Right ventricle myocardium superior (tissue), 1 donor: ENCODE measurements at regions of chr10 and their contacts with region 1.

Region 1: DNA sequence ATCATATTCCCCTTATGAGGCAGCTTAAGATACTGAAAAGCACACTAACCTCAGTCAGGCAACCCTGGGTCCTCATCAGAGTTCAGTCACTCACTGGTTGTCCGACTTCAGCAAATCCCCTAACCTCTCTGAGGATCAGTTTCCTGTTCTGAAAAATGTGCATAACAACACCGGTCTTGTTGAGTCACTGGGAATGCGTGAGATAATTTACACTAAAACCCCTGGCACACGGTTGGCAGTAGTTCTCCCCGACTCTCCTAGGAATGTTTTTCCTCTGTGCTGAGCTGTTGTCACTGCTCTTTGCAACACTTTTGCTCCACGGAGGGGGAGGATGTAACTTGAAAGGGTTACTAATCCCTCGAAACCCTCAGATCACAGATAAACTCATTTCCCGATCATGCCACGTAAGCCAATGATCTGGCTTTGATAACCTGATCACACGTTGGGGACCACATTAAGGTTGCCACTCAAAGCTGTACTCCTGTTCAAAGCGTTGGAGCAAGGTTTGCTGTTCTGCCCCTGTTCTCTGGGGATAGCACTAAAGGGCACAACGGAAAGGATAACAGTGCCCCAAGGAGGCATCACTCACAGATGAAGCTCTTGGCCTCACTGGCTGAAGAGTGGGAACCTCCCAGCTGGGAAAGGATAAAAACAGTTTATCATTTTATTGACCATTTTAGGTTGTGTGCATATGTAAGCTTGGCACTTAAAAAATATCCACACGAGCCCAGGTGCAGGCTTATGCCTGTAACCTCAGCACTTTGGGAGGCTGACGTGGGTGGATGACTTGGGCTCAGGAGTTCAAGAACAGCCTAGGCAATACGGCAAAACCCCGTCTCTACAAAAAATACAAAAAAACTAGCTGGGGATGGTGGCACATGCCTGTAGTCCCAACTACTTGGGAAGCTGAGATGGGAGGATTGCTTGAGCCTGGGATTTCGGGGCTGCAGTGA is 5.0 kb upstream of the RBM17 start:
- DNase-seq: no peak
- ATAC-seq: no peak

Region 2: DNA sequence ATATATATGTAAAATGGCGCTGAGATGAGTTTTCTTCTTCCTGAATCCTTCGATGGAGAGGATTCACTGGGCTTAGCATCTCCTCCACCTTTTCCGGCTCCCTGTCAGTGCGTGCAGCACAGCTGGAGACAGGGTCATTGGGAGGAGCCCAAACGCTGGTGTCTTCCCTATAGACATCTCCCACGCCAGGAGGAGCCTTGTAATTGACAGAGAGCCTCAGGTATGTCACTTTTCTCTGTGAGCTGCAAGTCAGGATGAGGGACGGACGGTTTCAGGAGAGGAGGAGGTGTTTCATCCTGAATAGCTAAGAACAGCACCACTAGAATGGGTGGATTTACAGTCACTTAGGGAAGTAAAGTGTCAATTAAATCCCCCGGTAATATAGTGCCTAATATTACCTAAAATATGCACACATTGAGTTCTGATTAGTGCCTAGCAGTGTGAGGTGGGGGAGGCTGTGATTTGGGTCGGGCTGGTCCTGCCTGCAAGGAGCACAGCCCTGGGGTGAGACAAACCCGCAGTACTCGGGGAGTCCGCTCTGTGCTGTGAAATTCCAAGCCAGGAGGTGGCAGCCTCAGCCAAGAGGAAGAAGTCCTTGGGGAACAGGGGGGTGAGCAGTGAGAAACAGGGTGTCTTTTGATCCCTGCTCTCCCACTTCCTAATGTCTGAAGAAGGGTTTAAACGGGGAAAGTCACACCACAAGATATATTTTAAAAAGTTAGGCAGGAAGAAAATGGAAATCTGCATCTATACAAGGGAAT is 134.6 kb before region 1 on chr10:
- intact Hi-C with region 1: no loop called
- DNase-seq: peak; percentile 72
- ATAC-seq: peak; percentile 62

Region 3: GRCh38 chr10:6014241-6014761 is 69.5 kb before region 1 on chr10:
- intact Hi-C with region 1: loop called (anchors 5 kb)
- DNase-seq: no peak
- ATAC-seq: peak; percentile 61